WTC11 (cell line): ENCODE measurements at regions of chr5 and their contacts with region 1.

Region 1: DNA sequence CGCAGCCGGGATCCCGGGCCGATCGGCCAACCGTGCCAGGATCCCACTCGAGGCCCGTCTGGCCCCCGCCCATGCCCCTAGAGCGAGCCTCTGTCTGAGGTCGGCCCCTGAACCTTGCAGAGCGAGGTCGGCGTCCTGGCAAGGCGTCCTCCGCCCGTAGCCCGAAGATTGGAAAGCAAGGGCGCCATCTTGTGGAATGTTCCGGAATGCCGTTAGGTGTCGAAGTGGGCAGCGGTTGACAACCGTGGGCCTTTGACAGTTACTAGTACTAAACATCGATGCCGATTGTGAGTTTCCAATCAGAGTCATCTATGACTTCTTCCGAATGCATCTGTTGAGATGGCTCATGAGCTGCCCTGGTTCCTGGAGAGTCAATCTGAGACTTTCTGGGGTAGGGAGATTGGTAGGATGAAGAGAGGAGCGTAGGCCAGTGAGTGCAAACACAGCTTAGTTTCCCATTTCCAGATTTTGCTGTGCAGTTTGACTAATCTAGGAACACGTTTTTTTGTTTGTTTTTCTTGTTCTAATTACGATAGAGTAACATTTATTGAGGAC is 923 bp upstream of the PLK2 start:
- DNase-seq: peak; percentile 92
- ATAC-seq: peak; percentile 73
- H3K4me3 Mint-ChIP-seq: peak overlapping the region; percentile 49
- H3K27ac Mint-ChIP-seq: peak overlapping the region; percentile 24; the same call in 1 of the 2 replicates
- H3K4me1 Mint-ChIP-seq: peaks cover 34% of the 10 kb centered on the region
- H3K27me3 Mint-ChIP-seq: peaks cover 2% of the 10 kb centered on the region
- CTCF ChIP-seq: peak; percentile 59

Region 2: GRCh38 chr5:57887851-57888621 is 572.8 kb before region 1 on chr5:
- CTCF ChIA-PET with region 1: interaction called, 12 read pairs
- POLR2A ChIA-PET with region 1: no interaction called
- DNase-seq: peak; percentile 35
- ATAC-seq: peak; percentile 85
- H3K4me3 Mint-ChIP-seq: no peak overlapping the region
- H3K27ac Mint-ChIP-seq: no peak overlapping the region
- H3K4me1 Mint-ChIP-seq: peaks cover 44% of the 10 kb centered on the region
- H3K27me3 Mint-ChIP-seq: no peaks in the 10 kb centered on the region
- CTCF ChIP-seq: no peak

Region 3: GRCh38 chr5:58447226-58447625 is 13.6 kb before region 1 on chr5:
- CTCF ChIA-PET with region 1: no interaction called
- POLR2A ChIA-PET with region 1: no interaction called
- DNase-seq: no peak
- ATAC-seq: no peak
- H3K4me3 Mint-ChIP-seq: no peak overlapping the region
- H3K27ac Mint-ChIP-seq: no peak overlapping the region
- H3K4me1 Mint-ChIP-seq: no peaks in the 10 kb centered on the region
- H3K27me3 Mint-ChIP-seq: no peaks in the 10 kb centered on the region
- CTCF ChIP-seq: no peak

Region 4: DNA sequence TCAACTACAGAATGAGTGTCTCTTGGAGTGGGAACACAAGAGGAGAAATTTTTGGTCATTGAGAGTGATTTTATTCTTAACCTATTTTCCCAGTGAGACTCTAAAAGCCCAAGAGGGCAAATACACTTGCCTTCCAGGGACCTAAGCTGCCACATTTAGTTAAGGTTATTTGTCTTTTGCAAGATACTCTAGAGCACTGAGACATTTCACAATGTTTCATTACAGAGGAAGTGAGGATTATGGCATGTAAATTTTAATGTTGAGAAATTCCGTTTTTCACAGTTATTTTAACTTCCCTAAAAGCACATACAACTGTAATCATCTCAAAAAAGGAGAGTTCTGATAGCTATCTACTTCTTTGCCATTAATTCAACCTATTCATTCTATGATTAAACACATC is 83.4 kb after region 1 on chr5:
- CTCF ChIA-PET with region 1: no interaction called
- POLR2A ChIA-PET with region 1: no interaction called
- DNase-seq: no peak
- ATAC-seq: no peak
- H3K4me3 Mint-ChIP-seq: no peak overlapping the region
- H3K27ac Mint-ChIP-seq: no peak overlapping the region
- H3K4me1 Mint-ChIP-seq: 0 out of 2 replicates have a peak, but pooled peaks cover 2% of the 10 kb centered on the region
- H3K27me3 Mint-ChIP-seq: peaks cover 3% of the 10 kb centered on the region
- CTCF ChIP-seq: no peak